ENCODE measurements at regions of chr11 and their contacts with region 1.

Region 1: DNA sequence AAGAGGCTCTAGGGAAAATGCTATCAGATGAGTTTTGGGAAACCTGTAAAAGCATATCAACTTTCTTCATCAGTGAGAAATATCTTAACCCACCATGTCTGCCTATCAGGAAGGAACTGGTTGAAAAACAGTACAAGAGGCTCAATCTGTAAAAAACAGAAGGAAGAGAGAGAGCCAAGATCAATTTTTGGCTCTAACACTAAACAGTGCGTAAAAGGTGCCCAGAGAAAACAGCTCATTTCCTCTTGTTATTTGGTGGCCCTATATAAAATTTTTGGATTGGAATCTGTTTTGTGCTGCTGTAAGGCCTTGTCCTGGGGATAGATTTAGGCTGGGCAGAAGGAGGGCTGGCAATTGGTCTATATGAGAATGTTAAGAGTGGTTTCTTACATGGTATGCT is 12.1 kb downstream of the MS4A2 start:
- DNase-seq: no peak

Region 2: DNA sequence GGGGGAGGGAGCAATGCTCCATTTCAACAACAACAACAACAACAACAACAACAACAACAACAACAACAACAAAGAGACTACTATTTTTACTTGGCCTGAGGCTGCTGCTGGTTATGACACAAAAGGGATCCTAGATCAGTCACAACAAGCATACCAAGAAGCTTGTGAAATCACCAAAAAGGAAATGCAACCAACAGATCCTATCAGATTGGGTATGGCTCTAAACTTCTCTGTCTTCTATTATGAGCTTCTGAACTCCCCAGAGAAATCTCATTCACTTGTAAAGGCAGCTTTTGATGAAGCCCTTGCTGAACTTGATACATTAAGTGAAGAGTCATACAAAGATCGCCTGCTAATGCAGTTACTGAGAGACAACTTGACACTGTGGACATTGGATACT is 22.5 kb before region 1 on chr11:
- intact Hi-C with region 1: loop called in 1 of 2 experiments (anchors 1 kb)
- DNase-seq: no peak

Region 3: GRCh38 chr11:60130496-60130895 is 30.0 kb after region 1 on chr11:
- intact Hi-C with region 1: no loop called
- DNase-seq: no peak